BJ (cell line): ENCODE measurements at regions of chr21 and their contacts with region 1.

Region 1: GRCh38 chr21:43646550-43647260 is 12.6 kb downstream of the HSF2BP start:
- DNase-seq: no peak
- H3K4me3 ChIP-seq: no peak overlapping the region
- H3K27me3 ChIP-seq: no peaks in the 10 kb centered on the region
- CTCF ChIP-seq: peak; percentile 98

Region 2: DNA sequence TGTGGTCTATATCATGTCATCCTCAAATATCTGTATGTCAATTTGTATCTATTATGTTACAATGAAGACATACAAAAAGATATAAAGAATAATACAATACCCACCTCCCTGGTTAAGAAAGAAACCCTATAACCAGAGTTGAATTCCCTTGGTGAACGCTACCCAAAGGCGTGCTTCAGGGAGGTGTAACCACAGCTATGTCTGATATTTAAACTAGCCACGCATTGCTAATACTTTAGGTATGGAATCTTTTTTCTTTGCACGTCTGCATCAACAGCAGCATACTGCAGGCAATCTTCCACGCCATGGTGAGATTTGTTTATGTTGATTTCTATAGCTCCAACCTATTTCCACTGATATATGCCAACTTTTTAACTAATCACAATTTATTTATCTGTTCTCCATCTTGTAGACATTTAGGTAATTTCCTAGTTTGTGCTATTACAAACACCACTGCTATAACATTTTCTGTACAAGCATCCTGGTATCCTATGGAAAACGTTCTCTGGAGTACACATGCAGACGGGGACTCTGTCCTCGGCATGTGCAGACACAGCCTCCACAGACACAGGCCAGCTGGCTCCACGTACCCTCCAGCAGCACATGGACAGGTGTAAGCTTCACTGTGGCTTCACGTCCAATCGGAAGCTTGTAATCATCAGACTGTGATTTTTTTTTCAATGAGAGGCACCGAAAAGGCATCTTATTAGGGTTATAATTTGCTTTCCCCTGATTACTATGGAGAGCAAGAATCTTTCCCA is 45.9 kb before region 1 on chr21:
- CTCF ChIA-PET with region 1: interaction called, 12 read pairs
- POLR2A ChIA-PET with region 1: no interaction called
- DNase-seq: peak; percentile 73
- H3K4me3 ChIP-seq: no peak overlapping the region
- H3K27me3 ChIP-seq: no peaks in the 10 kb centered on the region
- CTCF ChIP-seq: no peak

Region 3: GRCh38 chr21:43634618-43635017 is 12.1 kb before region 1 on chr21:
- CTCF ChIA-PET with region 1: interaction called, 10 read pairs
- POLR2A ChIA-PET with region 1: no interaction called
- DNase-seq: no peak
- H3K4me3 ChIP-seq: no peak overlapping the region
- H3K27me3 ChIP-seq: no peaks in the 10 kb centered on the region
- CTCF ChIP-seq: no peak

Region 4: DNA sequence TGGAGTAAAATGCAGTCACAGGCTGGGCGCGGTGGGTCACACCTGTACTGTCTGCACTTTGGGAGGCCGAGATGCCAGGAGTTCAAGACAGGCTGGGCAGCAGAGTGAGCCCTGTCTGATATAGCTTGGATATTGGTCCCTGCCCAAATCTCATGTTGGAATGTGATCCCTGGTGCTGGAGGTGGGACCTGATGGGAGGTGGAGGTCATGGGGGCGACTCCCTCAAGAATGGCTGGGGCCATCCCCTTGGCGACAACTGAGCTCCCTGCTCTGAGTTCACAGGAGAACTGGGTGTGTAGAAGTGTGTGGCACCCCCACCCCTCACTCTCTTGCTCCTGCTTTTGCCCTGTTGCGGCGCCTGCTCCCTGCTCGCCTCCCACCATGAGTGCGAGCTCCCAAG is 60.8 kb after region 1 on chr21:
- CTCF ChIA-PET with region 1: no interaction called
- POLR2A ChIA-PET with region 1: interaction called, 10 read pairs
- DNase-seq: no peak
- H3K4me3 ChIP-seq: no peak overlapping the region
- H3K27me3 ChIP-seq: no peaks in the 10 kb centered on the region
- CTCF ChIP-seq: no peak